Activated CD8-positive, alpha-beta T cell treated with anti-CD3 and anti-CD28 coated beads, Interleukin-2, amount 10 ng/mL, durations not matched to agents 7 days and 5 days (primary cell): ENCODE measurements at regions of chr2 and their contacts with region 1.

Region 1: DNA sequence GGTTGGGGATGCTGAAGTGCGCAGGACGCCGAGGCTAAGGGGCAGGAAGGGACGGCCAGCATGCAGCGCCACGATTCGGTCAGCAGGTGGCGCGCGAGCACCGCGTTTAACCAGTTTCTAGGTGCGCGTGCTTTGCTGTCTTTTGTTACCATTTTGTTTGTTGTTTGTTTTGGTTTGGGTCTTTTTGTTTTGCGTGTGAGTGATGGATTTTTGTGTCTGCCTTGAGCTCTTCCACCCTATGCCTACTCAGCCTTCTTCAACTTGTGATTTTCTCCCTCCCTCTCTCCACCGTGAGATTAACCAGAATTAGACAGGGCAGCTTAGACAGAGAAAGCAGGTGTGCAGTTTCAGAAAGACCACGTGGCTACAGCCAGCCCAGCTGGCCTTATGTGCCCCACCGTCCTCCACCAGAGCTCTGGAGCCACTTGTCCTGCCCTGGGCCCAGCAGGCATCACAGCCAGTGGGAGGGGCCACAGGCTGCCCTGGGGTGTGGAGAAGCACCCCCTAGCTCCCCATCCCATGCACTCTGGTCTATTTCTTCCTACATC is 180.2 kb downstream of the RNF144A start:
- DNase-seq: peak; percentile 79
- ATAC-seq: peak; percentile 94
- H3K4me3 Mint-ChIP-seq: peak overlapping the region; percentile 51
- H3K27ac Mint-ChIP-seq: no peak overlapping the region
- H3K4me1 Mint-ChIP-seq: peaks cover 8% of the 10 kb centered on the region
- H3K27me3 Mint-ChIP-seq: no peaks in the 10 kb centered on the region

Region 2: GRCh38 chr2:7083577-7084509 is 13.6 kb before region 1 on chr2:
- CTCF ChIA-PET with region 1: interaction called, 10 read pairs
- POLR2A ChIA-PET with region 1: no interaction called
- DNase-seq: peak; percentile 56
- ATAC-seq: peak; percentile 33
- H3K4me3 Mint-ChIP-seq: no peak overlapping the region
- H3K27ac Mint-ChIP-seq: peak overlapping the region; percentile 32
- H3K4me1 Mint-ChIP-seq: peaks cover 6% of the 10 kb centered on the region
- H3K27me3 Mint-ChIP-seq: no peaks in the 10 kb centered on the region

Region 3: DNA sequence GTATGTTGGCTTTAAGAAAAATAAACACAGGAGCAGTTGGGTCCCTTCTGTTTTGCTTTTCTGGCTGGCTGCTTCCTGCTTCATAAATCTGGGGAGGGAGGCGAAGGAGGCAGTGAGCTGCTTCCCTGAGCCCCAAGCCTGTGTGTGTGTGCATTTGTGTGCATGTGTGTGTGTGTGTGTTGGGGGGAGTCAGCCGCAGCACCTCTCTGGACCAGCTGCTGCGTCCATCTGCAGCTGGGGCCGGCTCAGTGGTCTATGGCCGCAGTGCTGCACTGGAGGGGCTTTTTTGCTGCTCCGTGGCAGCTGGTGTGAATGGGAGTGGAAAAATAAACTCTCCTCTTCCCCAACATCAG is 12.1 kb after region 1 on chr2:
- CTCF ChIA-PET with region 1: interaction called, 19 read pairs
- POLR2A ChIA-PET with region 1: no interaction called
- DNase-seq: no peak
- ATAC-seq: no peak
- H3K4me3 Mint-ChIP-seq: no peak overlapping the region
- H3K27ac Mint-ChIP-seq: no peak overlapping the region
- H3K4me1 Mint-ChIP-seq: no peaks in the 10 kb centered on the region
- H3K27me3 Mint-ChIP-seq: no peaks in the 10 kb centered on the region